ENCODE measurements at regions of chr3 and their contacts with region 1.

Region 1: GRCh38 chr3:53347261-53348064 is at the start of gene DCP1A:
- DNase-seq: peak; percentile 95 to 98
- ATAC-seq: peak; percentile 95 to 97 (median 96)
- H3K4me3 ChIP-seq: peak within 1 kb of the TSS; percentile 80
- H3K4me3 Mint-ChIP-seq: peak within 1 kb of the TSS; percentile 98
- H3K27ac ChIP-seq: peak within 1 kb of the TSS; percentile 90
- H3K27ac Mint-ChIP-seq: peak within 1 kb of the TSS; percentile 96 to 100
- H3K4me1 ChIP-seq: peaks cover 16% of the 10 kb centered on the region
- H3K4me1 Mint-ChIP-seq: peaks cover 29 to 46% of the 10 kb centered on the region in 2 donors
- H3K27me3 ChIP-seq: no peaks in the 10 kb centered on the region
- H3K27me3 Mint-ChIP-seq: peaks cover 0 to 2% of the 10 kb centered on the region in 2 donors
- CTCF ChIP-seq: no peak
- total RNA-seq, gene DCP1A: 36.5 to 48.9 (median 45.8) TPM

Region 2: DNA sequence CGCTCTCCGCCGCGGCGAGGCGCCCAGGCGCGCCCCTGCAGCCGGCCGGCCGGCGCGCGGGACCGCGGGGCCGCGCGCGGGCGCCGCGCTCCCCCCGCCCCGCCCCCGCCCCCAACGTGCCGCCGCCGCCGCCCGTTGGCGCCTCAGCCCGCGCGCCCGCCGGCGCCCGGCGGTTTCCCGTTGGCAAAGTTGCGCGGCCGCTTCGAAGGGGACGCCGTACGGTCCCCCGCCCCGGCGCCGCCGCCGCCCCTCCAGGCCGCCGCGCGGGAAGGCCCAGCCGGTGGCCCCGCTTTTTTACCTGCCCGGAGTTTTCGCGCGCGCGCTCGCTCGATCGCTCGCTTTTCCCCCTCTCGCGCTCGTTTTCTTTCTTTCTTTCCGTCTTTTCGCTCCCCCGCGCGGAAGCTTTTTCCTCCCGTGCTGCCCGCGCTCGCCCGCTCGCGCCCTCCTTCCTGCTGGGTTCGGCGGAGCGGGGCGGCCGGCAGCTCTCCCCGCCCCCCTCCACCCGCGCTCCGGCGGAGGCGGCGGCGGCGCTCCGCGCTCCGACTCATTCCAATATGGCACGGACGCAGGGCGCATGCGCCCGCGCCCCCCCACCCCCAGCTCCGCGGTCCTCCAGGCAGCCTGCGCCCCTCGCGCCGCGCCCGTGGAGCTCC is 301.8 kb before region 1 on chr3 and contains the start of gene SFMBT1:
- intact Hi-C with region 1: loop called (anchors 5 kb)
- DNase-seq: peak; percentile 57 to 92
- ATAC-seq: peak; percentile 53 to 67 (median 58)
- H3K4me3 ChIP-seq: peak within 1 kb of the TSS; percentile 65
- H3K4me3 Mint-ChIP-seq: peak within 1 kb of the TSS; percentile 96
- H3K27ac ChIP-seq: peak within 1 kb of the TSS; percentile 82
- H3K27ac Mint-ChIP-seq: peak within 1 kb of the TSS; percentile 92 to 94
- H3K4me1 ChIP-seq: peaks cover 9% of the 10 kb centered on the region
- H3K4me1 Mint-ChIP-seq: peaks cover 28% of the 10 kb centered on the region in 2 donors
- H3K27me3 ChIP-seq: no peaks in the 10 kb centered on the region
- H3K27me3 Mint-ChIP-seq: no peaks in the 10 kb centered on the region
- CTCF ChIP-seq: no peak
- total RNA-seq, gene SFMBT1: 20.2 to 22.3 (median 22.2) TPM

Region 3: DNA sequence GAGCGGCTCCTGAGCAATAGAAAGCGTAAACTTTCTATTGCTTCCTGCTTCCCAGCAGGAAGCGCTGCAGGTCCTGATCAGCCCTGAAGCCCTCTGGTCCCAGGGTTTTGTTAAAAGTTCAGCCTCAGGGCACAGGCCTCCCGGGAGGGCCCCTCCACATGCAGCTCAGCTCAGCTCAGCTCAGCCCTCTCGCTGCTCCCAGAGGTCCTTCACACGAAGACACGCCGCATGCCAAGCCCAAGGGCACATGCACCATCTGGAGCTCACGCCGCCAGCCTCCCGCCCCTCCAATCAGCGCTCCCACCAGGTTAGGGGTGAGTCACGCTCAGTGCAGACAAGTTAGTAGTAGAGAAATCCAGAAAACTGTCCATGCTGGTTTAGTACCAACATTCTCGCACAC is 104.3 kb before region 1 on chr3:
- intact Hi-C with region 1: no loop called
- DNase-seq: no peak
- ATAC-seq: no peak
- H3K4me3 ChIP-seq: no peak overlapping the region
- H3K4me3 Mint-ChIP-seq: no peak overlapping the region
- H3K27ac ChIP-seq: no peak overlapping the region
- H3K27ac Mint-ChIP-seq: no peak overlapping the region
- H3K4me1 ChIP-seq: peaks cover 2% of the 10 kb centered on the region
- H3K4me1 Mint-ChIP-seq: peaks cover 5 to 27% of the 10 kb centered on the region in 2 donors
- H3K27me3 ChIP-seq: no peaks in the 10 kb centered on the region
- H3K27me3 Mint-ChIP-seq: no peaks in the 10 kb centered on the region
- CTCF ChIP-seq: no peak

Region 4: DNA sequence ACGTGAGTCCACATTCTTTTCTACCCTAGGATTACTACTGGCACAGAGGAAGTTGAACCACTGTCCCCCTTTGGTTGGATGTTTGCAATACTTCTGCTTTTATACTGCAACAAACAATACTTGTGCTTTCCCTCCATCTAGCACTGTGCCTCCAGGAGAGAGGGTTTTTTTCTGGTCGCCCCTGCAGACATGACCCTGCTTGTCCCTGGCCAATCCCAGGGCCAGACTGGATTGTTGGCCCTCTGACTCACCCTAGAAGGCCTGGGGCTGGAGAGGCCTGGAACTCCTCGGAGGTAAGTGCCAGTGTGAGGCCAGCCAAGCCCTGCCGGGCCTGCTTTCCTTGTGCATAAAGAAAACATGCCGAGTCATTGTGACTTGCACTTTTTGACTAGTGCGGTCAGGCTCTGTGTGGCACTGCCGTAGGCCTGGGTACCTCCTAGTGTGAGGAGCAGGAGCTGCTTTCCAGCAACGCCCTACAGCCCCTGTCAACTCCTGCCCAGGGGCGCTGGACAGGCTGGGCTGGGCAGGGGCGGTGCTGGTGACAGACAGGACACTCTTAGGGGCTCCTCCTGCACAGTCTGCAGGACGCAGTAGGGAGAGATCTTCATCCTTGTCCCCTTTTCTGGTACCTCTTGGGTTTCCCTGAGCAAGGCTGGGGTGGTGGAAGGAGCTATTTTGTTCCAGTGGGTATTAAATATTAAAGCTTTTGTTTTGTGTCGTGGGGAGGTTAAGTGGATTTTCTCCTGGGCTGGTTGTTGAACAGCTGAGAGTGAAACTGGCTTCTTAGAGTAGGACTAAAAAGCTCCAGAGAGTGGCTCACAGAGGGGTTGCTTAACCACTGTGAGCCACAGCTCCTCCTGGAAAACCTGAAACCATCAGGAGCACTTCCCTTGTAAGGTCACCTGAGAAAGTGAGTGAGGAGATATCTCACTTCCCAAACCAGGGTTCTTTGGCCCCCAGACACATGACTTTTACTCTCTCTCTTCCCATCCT is 77.3 kb before region 1 on chr3:
- intact Hi-C with region 1: no loop called
- DNase-seq: no peak
- ATAC-seq: peak; percentile 29 to 85 (median 48)
- H3K4me3 ChIP-seq: no peak overlapping the region
- H3K4me3 Mint-ChIP-seq: no peak overlapping the region
- H3K27ac ChIP-seq: no peak overlapping the region
- H3K27ac Mint-ChIP-seq: peak overlapping the region in 1 of 2 donors; percentile 6
- H3K4me1 ChIP-seq: no peaks in the 10 kb centered on the region
- H3K4me1 Mint-ChIP-seq: peaks cover 0 to 4% of the 10 kb centered on the region in 2 donors
- H3K27me3 ChIP-seq: no peaks in the 10 kb centered on the region
- H3K27me3 Mint-ChIP-seq: no peaks in the 10 kb centered on the region
- CTCF ChIP-seq: no peak

Region 5: GRCh38 chr3:53891497-53892285 is 544.2 kb after region 1 on chr3 and contains the start of gene SELENOK:
- intact Hi-C with region 1: loop called (anchors 5 kb)
- DNase-seq: peak; percentile 95 to 99
- ATAC-seq: peak; percentile 92 to 97 (median 92)
- H3K4me3 ChIP-seq: peak within 1 kb of the TSS; percentile 80
- H3K4me3 Mint-ChIP-seq: peak within 1 kb of the TSS; percentile 99
- H3K27ac ChIP-seq: peak within 1 kb of the TSS; percentile 87
- H3K27ac Mint-ChIP-seq: peak within 1 kb of the TSS; percentile 96 to 99
- H3K4me1 ChIP-seq: peaks cover 10% of the 10 kb centered on the region
- H3K4me1 Mint-ChIP-seq: peaks cover 41% of the 10 kb centered on the region in 2 donors
- H3K27me3 ChIP-seq: peaks cover 3% of the 10 kb centered on the region
- H3K27me3 Mint-ChIP-seq: peaks cover 6 to 21% of the 10 kb centered on the region in 2 donors
- CTCF ChIP-seq: no peak
- total RNA-seq, gene SELENOK: 79.2 to 116 (median 95.4) TPM